Caki2 (cell line): ENCODE measurements at regions of chr22 and their contacts with region 1.

Region 1: DNA sequence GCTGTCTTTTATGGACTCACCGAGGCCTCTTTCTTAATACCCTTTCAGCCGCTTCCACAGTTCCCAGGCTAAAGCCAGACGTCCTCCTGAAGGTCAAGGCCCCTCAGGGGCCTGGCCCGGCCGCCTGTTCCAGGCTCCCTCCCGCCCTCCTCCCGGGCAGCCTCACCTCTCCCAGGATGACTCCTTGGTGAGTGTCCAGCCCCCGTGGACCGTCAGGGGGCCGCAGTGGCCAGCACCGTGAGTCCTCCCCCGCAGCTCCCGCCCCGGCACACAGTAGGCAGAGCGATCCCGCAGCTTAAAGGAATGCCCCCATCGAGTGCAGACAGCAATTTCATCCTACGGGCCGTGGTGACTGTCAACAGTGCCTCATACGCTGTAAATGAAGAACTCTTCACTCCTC is 32.9 kb downstream of the ELFN2 start:
- DNase-seq: no peak

Region 2: GRCh38 chr22:37328017-37328416 is 66.3 kb before region 1 on chr22:
- in situ Hi-C with region 1: loop called (anchors 10 kb)
- DNase-seq: peak; percentile 67

Region 3: DNA sequence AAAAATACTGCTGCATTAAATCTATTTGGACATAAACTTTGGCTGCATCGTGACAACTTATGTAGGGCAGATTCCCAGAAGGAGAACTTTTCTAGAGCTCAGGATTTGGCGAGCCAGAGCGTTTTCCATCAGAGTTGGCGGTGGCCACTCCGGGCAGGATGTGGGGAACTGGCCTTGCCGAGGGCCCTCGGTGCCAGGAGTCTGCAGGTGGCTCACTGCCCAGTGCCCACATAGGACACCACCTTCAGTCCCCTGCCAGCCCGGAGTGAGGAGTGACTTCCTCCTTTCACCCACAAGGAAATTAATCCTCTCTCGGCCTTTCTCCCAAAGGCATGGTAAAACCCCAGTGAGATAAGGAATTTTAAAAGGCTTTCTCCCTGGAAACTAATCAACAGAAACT is 187.2 kb after region 1 on chr22:
- in situ Hi-C with region 1: no loop called
- DNase-seq: no peak